Head of caudate nucleus (tissue), 42 donors: ENCODE measurements at regions of chr4 and their contacts with region 1.

Region 1: GRCh38 chr4:82373816-82374625 is at the start of gene HNRNPD:
- DNase-seq: peak; percentile 90 to 99 (median 96)

Region 2: DNA sequence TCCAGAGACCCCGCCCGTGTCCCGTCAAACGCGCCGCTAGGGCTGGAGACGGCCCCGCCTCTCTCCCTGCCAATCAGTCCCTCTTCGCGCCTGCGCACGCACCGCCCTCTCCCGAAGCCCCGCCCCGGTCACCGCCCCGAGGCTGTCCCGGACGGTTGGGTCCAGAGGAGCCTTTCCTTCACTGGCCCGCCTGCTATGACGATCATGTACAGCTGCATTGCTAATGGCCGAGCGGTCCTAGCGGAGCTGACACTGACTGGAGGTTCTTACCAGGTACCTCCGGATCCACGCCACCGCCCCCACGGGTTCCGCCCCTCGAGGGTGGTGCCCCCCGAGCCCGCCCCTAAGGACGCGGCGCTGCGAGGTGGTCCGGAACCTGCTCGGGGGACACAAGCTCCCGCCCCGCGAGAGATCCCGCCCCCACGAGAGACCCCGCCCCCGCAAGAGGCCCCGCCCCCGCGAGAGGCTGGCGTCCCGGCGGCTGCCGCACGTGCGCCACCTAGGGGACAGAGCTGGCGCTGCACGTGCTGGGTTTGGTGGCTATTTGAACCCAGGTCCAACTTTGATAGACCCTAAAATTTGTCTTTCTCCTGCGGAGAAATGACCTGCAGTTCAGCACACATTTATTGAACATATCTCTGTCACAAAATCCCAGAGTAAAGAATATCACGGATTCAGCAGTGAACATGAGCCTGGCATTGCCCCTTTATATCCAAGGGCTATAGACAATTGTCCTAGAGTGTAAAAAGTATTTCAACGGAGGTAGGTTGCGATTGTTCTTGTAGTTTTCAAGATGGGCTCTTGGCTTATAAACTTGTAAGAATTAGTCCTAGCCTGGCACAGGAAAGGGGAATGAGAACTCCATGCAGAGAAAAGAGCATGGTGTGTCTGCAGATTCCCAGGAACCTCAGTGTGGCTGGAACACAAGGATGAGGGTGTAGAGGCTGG is 88.9 kb before region 1 on chr4:
- intact Hi-C with region 1: loop called (anchors 5 kb)
- DNase-seq: peak; percentile 98 to 100 (median 99)

Region 3: GRCh38 chr4:82423245-82424054 is 49.4 kb after region 1 on chr4:
- intact Hi-C with region 1: no loop called
- DNase-seq: no peak

Region 4: DNA sequence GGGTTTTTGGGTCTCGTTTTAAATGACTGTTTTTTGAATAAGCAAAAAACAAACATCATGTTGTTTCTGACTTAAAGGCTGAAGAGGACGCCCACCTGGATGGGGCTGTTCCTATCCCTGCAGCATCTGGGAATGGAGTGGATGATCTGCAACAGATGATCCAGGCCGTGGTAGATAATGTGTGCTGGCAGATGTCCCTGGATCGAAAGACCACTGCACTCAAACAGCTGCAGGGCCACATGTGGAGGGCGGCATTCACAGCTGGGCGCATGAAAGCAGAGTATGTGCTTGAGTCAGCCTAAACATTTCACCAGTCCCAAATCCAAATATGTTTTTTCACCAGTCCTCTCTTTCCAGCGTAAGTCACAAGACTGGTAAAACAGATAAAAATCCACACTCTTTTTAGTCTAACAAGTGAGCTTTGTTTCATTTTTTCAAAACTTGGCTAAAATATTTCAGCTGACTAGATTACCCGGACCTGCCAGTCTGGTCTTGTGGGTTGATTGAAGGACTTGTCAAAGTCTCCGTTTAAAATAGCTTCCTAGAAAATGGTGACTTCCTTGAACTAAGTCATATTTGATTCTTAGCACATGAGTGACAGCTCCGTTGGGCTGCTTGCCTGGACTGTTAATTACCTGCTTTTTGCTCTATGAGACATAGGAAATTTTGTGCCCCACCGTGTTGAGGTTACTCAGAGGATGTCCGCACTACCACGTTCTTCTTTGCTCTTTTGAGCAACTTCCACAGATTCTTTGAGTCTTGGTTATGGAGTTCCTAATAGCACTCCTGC is 77.1 kb after region 1 on chr4:
- intact Hi-C with region 1: no loop called
- DNase-seq: peak in 3 of 42 donors; percentile 14 to 56 (median 50)